Mammary epithelial cell (primary cell): ENCODE measurements at regions of chr2 and their contacts with region 1.

Region 1: GRCh38 chr2:102473020-102473419 is at the start of gene SLC9A4:
- DNase-seq: peak; percentile 39
- H3K4me3 ChIP-seq: no peak within 1 kb of the TSS
- H3K27ac ChIP-seq: no peak within 1 kb of the TSS
- H3K4me1 ChIP-seq: no peaks in the 10 kb centered on the region
- H3K27me3 ChIP-seq: peaks cover 2% of the 10 kb centered on the region
- CTCF ChIP-seq: peak; percentile 90 to 91
- total RNA-seq, gene SLC9A4: 0.07 TPM in 1 of 2 donors, not detected in the other

Region 2: GRCh38 chr2:102505290-102505689 is 32.3 kb after region 1 on chr2:
- CTCF ChIA-PET with region 1: no interaction called
- dilution Hi-C with region 1: no loop called
- in situ Hi-C with region 1: no loop called
- intact Hi-C with region 1: no loop called
- DNase-seq: peak; percentile 47
- H3K4me3 ChIP-seq: no peak overlapping the region
- H3K27ac ChIP-seq: no peak overlapping the region
- H3K4me1 ChIP-seq: peaks cover 4% of the 10 kb centered on the region
- H3K27me3 ChIP-seq: no peaks in the 10 kb centered on the region
- CTCF ChIP-seq: no peak

Region 3: DNA sequence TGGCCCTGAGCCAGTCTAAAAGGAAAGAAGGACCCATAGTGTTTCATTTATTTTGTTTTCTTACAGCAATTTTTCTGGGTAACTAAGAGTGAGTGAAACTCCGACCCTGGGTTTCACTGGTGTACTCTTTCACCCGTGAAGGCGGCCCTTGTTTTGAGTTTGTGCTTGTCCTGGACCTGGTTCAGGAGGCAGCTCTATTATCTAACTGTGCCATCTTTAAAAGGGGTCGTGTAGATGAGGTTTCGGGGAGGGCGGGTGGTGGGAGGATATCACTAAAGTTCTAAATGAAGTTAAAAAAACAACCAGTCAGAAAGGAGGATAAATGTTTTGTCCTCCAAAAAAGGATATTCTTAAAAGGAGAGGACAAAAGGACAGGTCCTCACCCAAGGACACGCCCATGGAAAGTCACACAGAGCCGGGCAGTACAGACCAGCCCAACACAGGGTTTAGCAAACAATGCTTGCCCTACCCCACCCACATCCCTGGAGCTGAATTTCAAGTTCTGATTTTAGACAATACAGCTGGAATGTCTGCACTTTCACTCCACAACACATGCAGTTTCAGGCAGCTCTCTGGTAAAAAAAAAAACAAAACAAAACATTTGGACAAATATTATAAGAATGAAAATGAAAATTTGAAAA is 67.7 kb after region 1 on chr2:
- CTCF ChIA-PET with region 1: no interaction called
- dilution Hi-C with region 1: no loop called
- in situ Hi-C with region 1: no loop called
- intact Hi-C with region 1: no loop called
- DNase-seq: no peak
- H3K4me3 ChIP-seq: no peak overlapping the region
- H3K27ac ChIP-seq: no peak overlapping the region
- H3K4me1 ChIP-seq: no peaks in the 10 kb centered on the region
- H3K27me3 ChIP-seq: peaks cover 2% of the 10 kb centered on the region
- CTCF ChIP-seq: no peak

Region 4: GRCh38 chr2:102592597-102592996 is 119.6 kb after region 1 on chr2:
- CTCF ChIA-PET with region 1: no interaction called
- dilution Hi-C with region 1: no loop called
- in situ Hi-C with region 1: no loop called
- intact Hi-C with region 1: loop called (anchors 1 kb)
- DNase-seq: no peak
- H3K4me3 ChIP-seq: no peak overlapping the region
- H3K27ac ChIP-seq: no peak overlapping the region
- H3K4me1 ChIP-seq: no peaks in the 10 kb centered on the region
- H3K27me3 ChIP-seq: no peaks in the 10 kb centered on the region
- CTCF ChIP-seq: peak; percentile 65 to 72

Region 5: DNA sequence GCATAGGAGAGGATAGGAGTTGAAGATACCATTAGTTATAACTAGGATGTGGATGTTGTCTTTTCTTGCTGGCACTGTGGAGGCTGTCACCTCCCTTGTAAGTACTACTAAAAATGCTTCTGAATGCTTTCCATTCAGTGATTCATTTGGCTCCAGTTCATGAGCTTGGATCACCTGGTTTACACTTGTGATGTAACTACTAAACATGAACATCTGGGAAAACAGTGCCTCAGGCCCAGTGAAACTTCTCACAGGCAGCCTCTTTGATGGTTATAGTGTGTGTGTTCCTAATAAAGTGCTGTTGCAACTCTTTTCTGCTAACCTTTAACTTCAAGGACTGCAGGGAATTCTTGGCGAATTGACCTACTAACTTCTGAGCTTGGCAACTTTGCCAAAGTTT is 133.3 kb after region 1 on chr2:
- CTCF ChIA-PET with region 1: no interaction called
- dilution Hi-C with region 1: no loop called
- in situ Hi-C with region 1: loop called (anchors 10 kb)
- intact Hi-C with region 1: no loop called
- DNase-seq: peak; percentile 96
- H3K4me3 ChIP-seq: no peak overlapping the region
- H3K27ac ChIP-seq: no peak overlapping the region
- H3K4me1 ChIP-seq: peaks cover 5% of the 10 kb centered on the region
- H3K27me3 ChIP-seq: peaks cover 1% of the 10 kb centered on the region
- CTCF ChIP-seq: no peak

Region 6: DNA sequence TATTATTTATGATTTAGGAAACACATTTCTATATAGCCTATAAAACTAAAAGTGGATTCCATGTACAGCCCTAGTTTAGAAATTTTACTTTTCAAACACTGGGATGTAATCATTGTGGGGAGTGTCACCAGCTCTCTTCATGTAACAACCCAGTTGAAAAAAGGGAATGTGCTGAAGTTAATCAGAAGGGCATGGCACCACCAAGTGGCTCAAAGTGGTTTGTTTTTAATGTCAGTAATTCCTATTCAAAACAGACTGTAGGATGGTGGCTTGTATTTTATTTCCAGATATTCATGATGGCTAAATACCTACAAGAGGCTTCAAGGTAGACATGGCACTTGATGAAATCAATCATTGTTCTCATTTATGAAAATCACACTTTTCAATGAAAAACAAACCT is 230.7 kb after region 1 on chr2:
- CTCF ChIA-PET with region 1: no interaction called
- dilution Hi-C with region 1: no loop called
- in situ Hi-C with region 1: no loop called
- intact Hi-C with region 1: loop called (anchors 1 kb)
- DNase-seq: peak; percentile 50
- H3K4me3 ChIP-seq: no peak overlapping the region
- H3K27ac ChIP-seq: no peak overlapping the region
- H3K4me1 ChIP-seq: peaks cover under 1% of the 10 kb centered on the region
- H3K27me3 ChIP-seq: no peaks in the 10 kb centered on the region
- CTCF ChIP-seq: peak; percentile 55 to 70